ENCODE measurements at regions of chr10 and their contacts with region 1.

Region 1: DNA sequence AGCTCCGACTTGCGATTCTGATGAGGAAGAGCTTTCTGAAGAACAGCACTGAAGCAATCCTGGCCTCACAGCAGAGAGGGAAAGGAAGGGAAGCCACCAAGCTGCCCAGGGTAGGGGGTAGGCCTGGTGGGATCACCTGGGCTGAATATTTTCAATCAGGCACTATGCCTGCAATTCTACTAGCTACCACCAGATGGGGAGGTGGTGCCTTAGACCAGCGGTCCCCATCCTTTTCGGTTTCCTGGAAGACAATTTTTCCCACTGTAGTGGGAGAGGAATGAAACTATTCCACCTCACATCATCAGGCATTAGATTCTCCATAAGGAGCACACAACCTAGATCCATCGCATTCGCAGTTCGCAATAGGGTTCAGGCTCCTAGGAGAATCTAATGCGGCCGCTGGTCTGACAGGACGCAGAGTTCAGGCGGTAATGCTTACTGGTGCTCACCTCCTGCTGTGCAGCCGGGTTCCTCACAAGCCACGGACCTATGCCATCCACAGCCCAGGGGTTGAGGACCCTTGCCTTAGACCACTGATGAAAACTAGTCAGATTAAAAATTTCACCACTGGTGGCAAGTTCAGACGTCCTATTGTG is 2.7 kb downstream of the LRRC20 start:
- DNase-seq: no peak
- H3K4me3 ChIP-seq: no peak overlapping the region
- H3K27ac ChIP-seq: no peak overlapping the region
- H3K4me1 ChIP-seq: peaks cover 17% of the 10 kb centered on the region
- CTCF ChIP-seq: peak; percentile 83

Region 2: DNA sequence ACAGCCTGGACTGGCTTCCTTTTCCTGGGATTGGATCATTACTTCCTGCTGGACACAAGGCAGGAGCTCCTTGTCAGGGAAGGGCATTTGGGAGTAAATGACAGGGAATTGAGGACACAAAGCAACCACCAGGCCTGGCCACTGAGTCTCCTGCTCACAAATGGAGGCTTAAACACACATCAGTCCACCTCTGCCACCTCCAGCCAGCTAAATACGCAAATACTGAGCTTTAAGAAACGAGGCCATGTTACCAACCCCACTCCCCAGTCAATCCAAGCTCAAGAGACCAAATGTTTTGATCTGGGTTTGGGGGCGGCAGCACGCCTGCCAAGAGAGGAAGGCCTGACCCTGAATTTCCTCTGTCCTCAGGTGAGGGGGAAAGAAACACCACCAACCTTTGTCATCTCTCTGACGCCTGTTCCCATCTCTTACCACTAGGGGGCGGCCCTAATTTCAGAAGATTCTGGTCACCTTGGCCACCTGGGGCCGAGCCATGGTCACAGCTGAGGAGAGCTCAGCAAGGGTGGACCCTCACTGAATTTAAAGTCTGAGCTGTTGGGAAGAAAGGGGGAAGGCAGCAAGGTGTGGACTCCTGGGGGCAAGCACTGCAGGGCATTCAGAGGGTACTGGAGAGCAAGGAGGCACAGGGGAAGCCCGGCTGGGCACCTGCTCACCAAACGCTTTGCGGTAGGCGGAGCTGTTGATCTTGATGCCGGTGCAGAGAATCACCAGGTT is 263.6 kb before region 1 on chr10:
- CTCF ChIA-PET with region 1: no interaction called
- POLR2A ChIA-PET with region 1: no interaction called
- intact Hi-C with region 1: loop called (anchors 5 kb)
- DNase-seq: peak; percentile 71
- H3K4me3 ChIP-seq: no peak overlapping the region
- H3K27ac ChIP-seq: no peak overlapping the region
- H3K4me1 ChIP-seq: no peaks in the 10 kb centered on the region
- CTCF ChIP-seq: peak; percentile 95